Pancreas (tissue), 10 donors: ENCODE measurements at regions of chr9 and their contacts with region 1.

Region 1: GRCh38 chr9:129177791-129178559 is at the start of gene IER5L:
- DNase-seq: peak; percentile 92 to 99 (median 96)
- ATAC-seq: peak; percentile 69 to 85 (median 80)
- H3K4me3 ChIP-seq: peak within 1 kb of the TSS; percentile 59 to 83 (median 63)
- H3K27ac ChIP-seq: peak within 1 kb of the TSS; percentile 63 to 99 (median 94)
- H3K4me1 ChIP-seq: peaks cover 0 to 11% (median 7%) of the 10 kb centered on the region in 3 donors
- H3K27me3 ChIP-seq: no peaks in the 10 kb centered on the region
- CTCF ChIP-seq: no peak
- total RNA-seq, gene IER5L: 1.8 to 13.2 (median 4.6) TPM

Region 2: DNA sequence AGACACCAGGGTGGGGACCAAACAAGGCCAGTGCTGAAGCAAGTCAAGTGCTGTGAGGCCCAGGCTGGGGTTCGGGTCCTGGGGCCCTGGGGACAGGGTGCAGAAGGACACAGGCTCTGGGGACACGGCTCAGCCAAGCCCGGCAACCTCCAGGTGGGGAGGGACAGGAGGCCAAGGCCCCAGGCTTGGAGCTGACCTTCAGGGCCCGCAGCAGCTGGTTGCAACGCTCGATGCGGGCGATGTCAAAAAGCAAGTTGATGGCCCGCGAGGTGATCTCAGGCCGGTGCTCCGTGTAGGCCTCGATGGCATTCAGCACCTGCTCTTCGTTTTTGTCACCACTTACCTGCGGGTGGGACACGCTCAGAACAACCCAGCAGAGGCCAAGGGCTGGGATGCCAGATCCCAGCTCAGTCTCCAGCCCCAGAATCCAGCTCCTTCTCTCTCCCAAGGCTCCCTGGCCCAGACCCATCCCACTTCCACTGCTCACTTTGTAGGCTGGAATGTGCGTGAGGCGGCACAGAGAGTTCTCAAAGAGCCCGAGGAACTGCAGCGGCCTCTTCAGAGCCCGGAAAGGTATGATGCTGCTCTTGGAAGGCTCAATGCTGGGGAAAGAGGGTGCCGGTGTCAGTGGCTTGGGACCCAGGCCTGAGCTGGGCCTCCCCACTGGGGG is 426.9 kb before region 1 on chr9:
- intact Hi-C with region 1: no loop called
- DNase-seq: no peak
- ATAC-seq: peak in 1 of 4 donors; percentile 11
- H3K4me3 ChIP-seq: no peak overlapping the region
- H3K27ac ChIP-seq: no peak overlapping the region
- H3K4me1 ChIP-seq: no peaks in the 10 kb centered on the region
- H3K27me3 ChIP-seq: no peaks in the 10 kb centered on the region
- CTCF ChIP-seq: no peak

Region 3: DNA sequence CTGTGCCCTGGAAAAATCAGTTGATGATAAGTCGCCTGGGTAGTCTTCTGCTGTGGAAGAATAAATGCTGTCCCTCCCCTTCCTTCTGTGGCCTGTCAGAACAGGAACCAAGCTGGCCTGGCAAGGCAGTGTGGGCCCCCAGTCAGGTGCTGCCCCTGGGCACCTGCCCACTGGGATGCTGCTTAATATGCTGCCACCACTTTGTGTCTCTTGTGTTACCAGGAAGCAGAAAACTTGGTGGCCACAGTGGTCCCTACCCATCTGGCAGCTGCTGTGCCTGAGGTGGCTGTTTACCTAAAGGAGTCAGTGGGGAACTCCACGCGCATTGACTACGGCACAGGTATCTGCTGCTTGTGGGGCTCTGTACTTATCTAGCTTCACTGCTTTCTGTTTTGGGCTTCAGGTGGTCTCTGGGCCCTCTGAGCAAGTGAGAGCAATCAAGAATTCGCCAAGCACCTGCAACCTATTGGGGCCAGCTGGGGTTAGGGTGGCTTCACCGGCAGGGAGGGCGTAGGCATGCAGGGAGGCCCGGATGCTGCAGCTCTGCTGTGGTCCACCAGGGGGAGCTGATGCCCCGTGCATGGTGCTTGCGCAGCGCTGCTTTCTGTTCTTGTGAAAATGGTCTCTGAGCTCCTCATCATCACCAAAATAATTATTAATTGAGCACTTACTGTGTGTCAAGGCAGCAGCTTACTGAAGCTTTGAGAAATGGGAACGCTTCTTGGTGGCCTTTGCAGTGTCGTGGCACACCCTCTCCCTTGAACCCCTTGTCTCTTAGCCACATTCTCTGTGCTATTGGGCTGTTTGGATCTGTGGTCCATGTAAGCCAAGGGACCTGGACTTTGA is 46.5 kb before region 1 on chr9:
- intact Hi-C with region 1: loop called in 1 of 3 experiments (anchors 5 kb)
- DNase-seq: peak; percentile 66 to 92 (median 84)
- ATAC-seq: peak; percentile 83 to 97 (median 94)
- H3K4me3 ChIP-seq: no peak overlapping the region
- H3K27ac ChIP-seq: no peak overlapping the region
- H3K4me1 ChIP-seq: no peaks in the 10 kb centered on the region
- H3K27me3 ChIP-seq: no peaks in the 10 kb centered on the region
- CTCF ChIP-seq: peak; percentile 96 to 98 (median 97)

Region 4: GRCh38 chr9:129320575-129321263 is 142.7 kb after region 1 on chr9:
- intact Hi-C with region 1: loop called in 1 of 3 experiments (anchors 10 kb)
- DNase-seq: peak in 5 of 6 donors; percentile 52 to 76 (median 54)
- ATAC-seq: peak; percentile 75 to 89 (median 87)
- H3K4me3 ChIP-seq: peak overlapping the region in 2 of 4 donors; percentile 30 to 44
- H3K27ac ChIP-seq: peak overlapping the region in 3 of 4 donors; percentile 53 to 79 (median 72)
- H3K4me1 ChIP-seq: peaks cover 7 to 21% (median 14%) of the 10 kb centered on the region in 3 donors
- H3K27me3 ChIP-seq: no peaks in the 10 kb centered on the region
- CTCF ChIP-seq: no peak

Region 5: GRCh38 chr9:129482521-129483414 is 304.8 kb after region 1 on chr9:
- intact Hi-C with region 1: loop called in 1 of 3 experiments (anchors 10 kb)
- DNase-seq: peak; percentile 88 to 94 (median 92)
- ATAC-seq: peak; percentile 66 to 82 (median 72)
- H3K4me3 ChIP-seq: peak overlapping the region; percentile 14 to 58 (median 40)
- H3K27ac ChIP-seq: peak overlapping the region; percentile 99 to 100 (median 100)
- H3K4me1 ChIP-seq: peaks cover 34 to 51% (median 38%) of the 10 kb centered on the region in 3 donors
- H3K27me3 ChIP-seq: no peaks in the 10 kb centered on the region
- CTCF ChIP-seq: no peak

Region 6: DNA sequence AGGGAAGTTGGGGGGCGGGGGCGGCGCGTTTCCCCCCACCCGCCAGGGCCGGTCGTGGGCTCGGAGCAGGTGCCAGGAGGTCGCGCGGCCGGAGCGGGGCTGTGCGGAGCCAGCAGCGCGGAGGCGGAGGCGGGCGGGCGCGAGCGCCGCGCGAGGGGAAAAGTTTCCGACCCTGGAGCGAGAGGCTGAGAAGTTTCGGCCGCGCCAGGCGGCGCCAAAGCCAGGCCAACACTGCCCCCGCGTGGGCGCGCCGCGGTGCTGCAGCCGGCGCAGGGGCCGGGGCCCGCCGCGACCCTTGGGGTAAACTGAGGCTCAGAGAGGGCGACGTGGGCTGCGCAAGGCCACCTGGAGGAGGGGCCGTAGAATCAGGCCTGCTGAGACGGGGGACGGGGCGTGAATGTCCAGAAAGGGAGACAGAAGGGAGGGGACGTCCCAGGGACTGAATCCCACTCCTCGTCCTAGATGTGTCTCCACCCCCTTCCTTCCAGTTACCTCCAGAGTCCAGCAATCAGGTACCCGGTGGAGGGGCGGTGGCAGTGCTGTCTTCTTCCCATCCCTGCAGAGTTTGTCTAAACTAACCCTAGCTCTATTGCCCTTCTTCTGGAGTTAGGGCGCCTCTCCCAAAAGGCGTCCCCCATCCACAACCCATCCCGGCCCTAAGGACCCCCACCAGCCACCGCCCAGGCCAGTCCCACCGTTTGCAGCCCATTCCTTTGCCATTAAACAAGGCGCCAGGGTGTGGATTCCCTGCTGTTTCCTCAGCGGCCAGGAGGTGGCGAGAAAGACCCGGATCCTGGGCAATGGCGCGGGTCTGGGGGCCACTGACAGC is 432.7 kb after region 1 on chr9:
- intact Hi-C with region 1: loop called in 2 of 3 experiments (anchors 10 kb)
- DNase-seq: peak; percentile 71 to 91 (median 84)
- ATAC-seq: peak; percentile 75 to 77 (median 76)
- H3K4me3 ChIP-seq: peak overlapping the region; percentile 11 to 71 (median 44)
- H3K27ac ChIP-seq: peak overlapping the region in 3 of 4 donors; percentile 52 to 85 (median 81)
- H3K4me1 ChIP-seq: peaks cover 4 to 8% (median 4%) of the 10 kb centered on the region in 3 donors
- H3K27me3 ChIP-seq: no peaks in the 10 kb centered on the region
- CTCF ChIP-seq: peak; percentile 92 to 96 (median 94)